CD4-positive, alpha-beta memory T cell (primary cell): ENCODE measurements at regions of chrX and their contacts with region 1.

Region 1: GRCh38 chrX:154397819-154398724 is at the start of gene RPL10:
- DNase-seq: peak; percentile 86 to 94 (median 92)
- H3K4me3 ChIP-seq: peak within 1 kb of the TSS; percentile 55 to 95
- H3K4me3 Mint-ChIP-seq: peak within 1 kb of the TSS; percentile 96 to 99 (median 99)
- H3K27ac ChIP-seq: peak within 1 kb of the TSS; percentile 96
- H3K27ac Mint-ChIP-seq: peak within 1 kb of the TSS; percentile 99 to 100 (median 99)
- H3K4me1 ChIP-seq: peaks cover 15% of the 10 kb centered on the region
- H3K4me1 Mint-ChIP-seq: peaks cover 7 to 32% (median 16%) of the 10 kb centered on the region in 4 donors
- H3K27me3 ChIP-seq: no peaks in the 10 kb centered on the region
- H3K27me3 Mint-ChIP-seq: no peaks in the 10 kb centered on the region
- total RNA-seq, gene RPL10: 5,157 to 5,386 TPM

Region 2: GRCh38 chrX:154327038-154327820 is 70.8 kb before region 1 on chrX:
- CTCF ChIA-PET with region 1: interaction called, 3 read pairs
- POLR2A ChIA-PET with region 1: interaction called, 19 read pairs
- intact Hi-C with region 1: no loop called
- DNase-seq: peak; percentile 60 to 68 (median 63)
- H3K4me3 ChIP-seq: peak overlapping the region; percentile 23 to 37
- H3K4me3 Mint-ChIP-seq: peak overlapping the region; percentile 65 to 87 (median 74)
- H3K27ac ChIP-seq: peak overlapping the region; percentile 26
- H3K27ac Mint-ChIP-seq: peak overlapping the region; percentile 81 to 97 (median 90)
- H3K4me1 ChIP-seq: peaks cover 49% of the 10 kb centered on the region
- H3K4me1 Mint-ChIP-seq: peaks cover 24 to 50% (median 35%) of the 10 kb centered on the region in 4 donors
- H3K27me3 ChIP-seq: no peaks in the 10 kb centered on the region
- H3K27me3 Mint-ChIP-seq: no peaks in the 10 kb centered on the region

Region 3: GRCh38 chrX:154411322-154411980 is 13.4 kb after region 1 on chrX and contains the start of gene TAFAZZIN:
- CTCF ChIA-PET with region 1: interaction called, 4 read pairs
- POLR2A ChIA-PET with region 1: interaction called, 101 read pairs
- intact Hi-C with region 1: no loop called
- DNase-seq: peak; percentile 70 to 76 (median 75)
- H3K4me3 ChIP-seq: peak within 1 kb of the TSS; percentile 42 to 51
- H3K4me3 Mint-ChIP-seq: peak within 1 kb of the TSS; percentile 87 to 98 (median 90)
- H3K27ac ChIP-seq: peak within 1 kb of the TSS; percentile 70
- H3K27ac Mint-ChIP-seq: peak within 1 kb of the TSS; percentile 90 to 95 (median 94)
- H3K4me1 ChIP-seq: peaks cover 10% of the 10 kb centered on the region
- H3K4me1 Mint-ChIP-seq: peaks cover 4 to 24% (median 11%) of the 10 kb centered on the region in 4 donors
- H3K27me3 ChIP-seq: no peaks in the 10 kb centered on the region
- H3K27me3 Mint-ChIP-seq: no peaks in the 10 kb centered on the region
- total RNA-seq, gene TAFAZZIN: 139 to 141 TPM

Region 4: DNA sequence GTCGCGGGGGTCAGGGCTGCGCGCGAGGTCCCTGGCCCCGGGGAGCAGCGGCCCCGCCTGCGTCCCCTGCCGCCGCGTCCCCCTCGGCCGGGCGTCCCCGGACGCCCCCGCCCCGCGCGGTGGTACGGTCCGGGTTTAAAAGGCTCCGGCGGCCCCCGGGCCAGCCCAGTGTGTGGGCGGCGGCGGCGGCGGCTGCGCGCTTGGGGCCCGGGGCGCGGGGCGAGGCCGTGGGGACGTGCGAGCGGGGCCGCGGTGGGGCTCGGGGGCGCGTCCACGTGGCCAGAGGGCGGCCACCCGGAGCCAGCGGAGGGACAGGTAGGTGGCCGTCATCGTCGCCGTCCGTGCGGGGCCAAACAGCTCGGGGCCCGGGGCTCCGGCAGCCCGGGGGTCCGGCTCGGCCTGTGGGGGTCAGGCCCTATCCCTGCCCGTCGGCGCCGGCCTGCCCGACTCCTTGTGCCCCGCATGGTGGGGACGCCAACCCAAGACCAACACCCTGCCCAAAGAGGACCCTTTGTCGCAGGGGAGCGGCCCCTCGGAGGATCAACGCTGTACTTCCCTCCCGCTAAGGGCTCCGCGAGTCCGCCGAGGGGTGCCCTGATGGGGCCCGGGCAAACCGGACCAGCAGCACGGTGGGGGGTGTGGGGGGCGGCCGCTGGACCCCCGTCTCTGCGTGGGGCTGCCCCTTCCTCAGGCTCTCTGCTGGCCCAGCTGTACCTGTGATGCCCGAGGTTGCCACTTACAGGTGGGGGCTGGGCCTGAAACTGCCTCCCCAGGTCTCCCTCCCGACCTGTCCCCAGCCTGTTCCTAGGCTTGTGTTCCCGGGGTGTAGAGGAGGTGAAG is 60.3 kb after region 1 on chrX and contains the start of gene PLXNA3:
- CTCF ChIA-PET with region 1: interaction called, 4 read pairs
- POLR2A ChIA-PET with region 1: interaction called, 35 read pairs
- intact Hi-C with region 1: no loop called
- DNase-seq: peak in 4 of 5 donors; percentile 70 to 79 (median 74)
- H3K4me3 ChIP-seq: peak within 1 kb of the TSS; percentile 17 to 55
- H3K4me3 Mint-ChIP-seq: peak within 1 kb of the TSS; percentile 89 to 97 (median 94)
- H3K27ac ChIP-seq: peak within 1 kb of the TSS; percentile 55
- H3K27ac Mint-ChIP-seq: peak within 1 kb of the TSS; percentile 74 to 97 (median 95)
- H3K4me1 ChIP-seq: peaks cover 9% of the 10 kb centered on the region
- H3K4me1 Mint-ChIP-seq: peaks cover 4 to 19% (median 6%) of the 10 kb centered on the region in 4 donors
- H3K27me3 ChIP-seq: no peaks in the 10 kb centered on the region
- H3K27me3 Mint-ChIP-seq: no peaks in the 10 kb centered on the region
- total RNA-seq, gene PLXNA3: 78.8 to 90.3 TPM

Region 5: GRCh38 chrX:154515878-154516655 is 118.0 kb after region 1 on chrX and contains the start of gene FAM3A:
- CTCF ChIA-PET with region 1: no interaction called
- POLR2A ChIA-PET with region 1: interaction called, 34 read pairs
- intact Hi-C with region 1: no loop called
- DNase-seq: peak; percentile 87 to 90 (median 89)
- H3K4me3 ChIP-seq: peak within 1 kb of the TSS; percentile 42 to 56
- H3K4me3 Mint-ChIP-seq: peak within 1 kb of the TSS; percentile 83 to 88 (median 85)
- H3K27ac ChIP-seq: peak within 1 kb of the TSS; percentile 81
- H3K27ac Mint-ChIP-seq: peak within 1 kb of the TSS; percentile 74 to 95 (median 92)
- H3K4me1 ChIP-seq: peaks cover 18% of the 10 kb centered on the region
- H3K4me1 Mint-ChIP-seq: peaks cover 10 to 30% (median 17%) of the 10 kb centered on the region in 4 donors
- H3K27me3 ChIP-seq: no peaks in the 10 kb centered on the region
- H3K27me3 Mint-ChIP-seq: no peaks in the 10 kb centered on the region
- total RNA-seq, gene FAM3A: 51.0 to 51.8 TPM

Region 6: GRCh38 chrX:154534862-154535670 is 137.0 kb after region 1 on chrX:
- CTCF ChIA-PET with region 1: interaction called, 26 read pairs
- POLR2A ChIA-PET with region 1: interaction called, 56 read pairs
- intact Hi-C with region 1: no loop called
- DNase-seq: peak; percentile 85 to 92 (median 89)
- H3K4me3 ChIP-seq: no peak overlapping the region
- H3K4me3 Mint-ChIP-seq: no peak overlapping the region
- H3K27ac ChIP-seq: peak overlapping the region; percentile 43
- H3K27ac Mint-ChIP-seq: peak overlapping the region in 6 of 7 donors; percentile 22 to 86 (median 72)
- H3K4me1 ChIP-seq: peaks cover 8% of the 10 kb centered on the region
- H3K4me1 Mint-ChIP-seq: peaks cover 2 to 14% (median 5%) of the 10 kb centered on the region in 4 donors
- H3K27me3 ChIP-seq: no peaks in the 10 kb centered on the region
- H3K27me3 Mint-ChIP-seq: no peaks in the 10 kb centered on the region

Region 7: GRCh38 chrX:155938132-155938531 is 1540.1 kb after region 1 on chrX:
- CTCF ChIA-PET with region 1: no interaction called
- POLR2A ChIA-PET with region 1: no interaction called
- intact Hi-C with region 1: no loop called
- DNase-seq: no peak
- H3K4me3 ChIP-seq: no peak overlapping the region
- H3K4me3 Mint-ChIP-seq: no peak overlapping the region
- H3K27ac ChIP-seq: no peak overlapping the region
- H3K27ac Mint-ChIP-seq: no peak overlapping the region
- H3K4me1 ChIP-seq: no peaks in the 10 kb centered on the region
- H3K4me1 Mint-ChIP-seq: no peaks in the 10 kb centered on the region
- H3K27me3 ChIP-seq: no peaks in the 10 kb centered on the region
- H3K27me3 Mint-ChIP-seq: no peaks in the 10 kb centered on the region